Left cardiac atrium (tissue), 4 donors: ENCODE measurements at regions of chr4 and their contacts with region 1.

Region 1: DNA sequence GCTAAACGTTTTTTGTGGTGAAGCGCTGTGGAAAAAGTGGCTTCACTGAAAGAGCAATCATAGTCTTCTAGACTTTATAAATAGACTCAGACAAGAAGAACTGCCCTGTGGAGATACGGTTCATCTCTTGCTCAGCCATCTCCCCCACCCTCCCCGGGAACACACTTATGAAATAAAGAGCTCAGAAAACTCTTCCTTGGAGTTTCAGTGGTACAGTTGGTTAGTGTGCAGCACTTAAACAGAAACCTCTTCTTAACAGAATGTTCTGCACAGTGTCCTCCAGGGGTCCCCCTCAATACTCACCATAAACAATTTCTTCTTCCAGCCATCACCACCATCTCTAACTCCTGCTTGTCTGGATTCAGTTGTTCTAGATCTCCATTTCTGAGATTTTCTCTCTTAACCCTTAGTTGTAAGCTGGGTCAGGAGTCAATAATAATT is 313.0 kb downstream of the ARHGAP10 start:
- DNase-seq: no peak
- ATAC-seq: peak; percentile 38 to 42

Region 2: GRCh38 chr4:148065075-148065474 is 20.1 kb after region 1 on chr4:
- intact Hi-C with region 1: loop called in 1 of 2 experiments (anchors 1 kb)
- DNase-seq: no peak
- ATAC-seq: no peak